Heart left ventricle (tissue), 16 donors: ENCODE measurements at regions of chr15 and their contacts with region 1.

Region 1: GRCh38 chr15:89740137-89740536 is 10.9 kb downstream of the MESP1 start:
- DNase-seq: peak in 1 of 5 donors; percentile 42
- ATAC-seq: peak; percentile 54 to 90 (median 84)
- H3K4me3 ChIP-seq: no peak overlapping the region
- H3K27ac ChIP-seq: no peak overlapping the region
- H3K4me1 ChIP-seq: no peaks in the 10 kb centered on the region
- H3K27me3 ChIP-seq: peaks cover 0 to 13% (median 0%) of the 10 kb centered on the region in 9 donors
- CTCF ChIP-seq: peak; percentile 80 to 94 (median 90)
- POLR2A ChIP-seq: no peak

Region 2: GRCh38 chr15:89647191-89647851 is 92.8 kb before region 1 on chr15:
- intact Hi-C with region 1: loop called in 2 of 10 experiments (anchors 5 to 10 kb)
- DNase-seq: peak; percentile 72 to 90 (median 75)
- ATAC-seq: peak; percentile 43 to 71 (median 62)
- H3K4me3 ChIP-seq: no peak overlapping the region
- H3K27ac ChIP-seq: no peak overlapping the region
- H3K4me1 ChIP-seq: peaks cover 0 to 9% (median 0%) of the 10 kb centered on the region in 12 donors
- H3K27me3 ChIP-seq: no peaks in the 10 kb centered on the region
- CTCF ChIP-seq: peak; percentile 71 to 92 (median 77)
- POLR2A ChIP-seq: no peak

Region 3: DNA sequence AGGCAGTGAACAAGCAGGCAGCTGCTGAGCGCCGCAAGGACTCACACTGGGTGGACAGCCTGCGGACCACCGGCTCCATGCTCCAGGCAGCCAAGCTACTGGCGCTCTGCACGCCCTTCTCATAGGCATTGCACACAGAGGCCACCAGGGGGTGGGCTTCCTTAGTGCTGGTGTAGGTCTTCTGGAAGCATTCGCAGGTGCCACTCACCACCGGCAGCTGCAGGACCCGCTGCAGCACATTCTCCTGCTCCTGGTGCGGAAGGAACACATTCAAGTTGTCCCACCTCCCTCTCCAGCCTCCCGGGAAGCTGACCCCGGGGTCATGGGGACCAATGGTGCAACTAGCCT is 67.0 kb before region 1 on chr15:
- intact Hi-C with region 1: no loop called
- DNase-seq: no peak
- ATAC-seq: peak in 1 of 4 donors; percentile 42
- H3K4me3 ChIP-seq: no peak overlapping the region
- H3K27ac ChIP-seq: no peak overlapping the region
- H3K4me1 ChIP-seq: peaks cover 0 to 4% (median 0%) of the 10 kb centered on the region in 12 donors
- H3K27me3 ChIP-seq: no peaks in the 10 kb centered on the region
- CTCF ChIP-seq: peak in 9 of 12 donors; percentile 16 to 39 (median 22)
- POLR2A ChIP-seq: no peak

Region 4: DNA sequence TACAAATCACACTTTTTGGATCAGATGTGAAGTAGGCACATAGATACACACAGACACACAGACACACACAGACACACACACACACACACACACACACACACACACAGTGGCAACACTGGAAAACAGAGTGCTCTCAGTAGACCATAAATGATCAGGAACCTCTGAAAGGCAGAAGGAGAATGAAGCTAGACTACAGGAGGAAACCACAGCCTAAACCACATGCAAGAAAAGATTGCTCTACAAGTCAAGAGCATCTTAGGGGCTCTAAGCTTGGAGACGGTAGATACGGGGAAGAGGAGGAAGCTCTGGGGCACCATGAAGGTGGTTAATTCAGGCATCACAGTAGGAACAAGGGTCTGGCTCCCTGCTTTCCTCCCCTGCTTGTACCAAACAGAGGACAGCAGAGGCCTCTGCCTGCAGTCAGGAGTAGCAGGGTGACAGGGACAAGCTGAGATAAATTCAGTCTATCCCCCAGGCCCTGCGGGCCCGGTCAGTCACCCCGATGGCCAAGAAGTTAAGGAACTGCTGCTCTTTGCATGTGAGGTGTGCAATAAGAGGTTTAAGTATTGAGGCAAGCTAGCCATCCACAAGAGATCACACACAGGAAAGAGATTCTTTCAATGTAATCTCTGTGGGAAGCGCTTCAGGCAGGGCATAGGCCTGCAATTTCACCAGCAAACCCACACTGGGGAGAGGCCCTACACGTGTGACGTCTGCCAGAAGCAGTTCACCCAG is 196.1 kb after region 1 on chr15:
- intact Hi-C with region 1: no loop called
- DNase-seq: no peak
- ATAC-seq: no peak
- H3K4me3 ChIP-seq: no peak overlapping the region
- H3K27ac ChIP-seq: no peak overlapping the region
- H3K4me1 ChIP-seq: no peaks in the 10 kb centered on the region
- H3K27me3 ChIP-seq: no peaks in the 10 kb centered on the region
- CTCF ChIP-seq: no peak
- POLR2A ChIP-seq: no peak

Region 5: GRCh38 chr15:89971592-89971997 is 231.5 kb after region 1 on chr15:
- intact Hi-C with region 1: loop called in 1 of 10 experiments (anchors 5 kb)
- DNase-seq: peak; percentile 32 to 71 (median 46)
- ATAC-seq: peak; percentile 42 to 86 (median 76)
- H3K4me3 ChIP-seq: no peak overlapping the region
- H3K27ac ChIP-seq: peak overlapping the region in 1 of 12 donors; percentile 30
- H3K4me1 ChIP-seq: peaks cover 0 to 49% (median 0%) of the 10 kb centered on the region in 12 donors
- H3K27me3 ChIP-seq: no peaks in the 10 kb centered on the region
- CTCF ChIP-seq: peak in 11 of 12 donors; percentile 19 to 61 (median 41)
- POLR2A ChIP-seq: no peak